ENCODE measurements at regions of chr9 and their contacts with region 1.

Region 1: GRCh38 chr9:129610473-129611301 is 10.2 kb downstream of the C9orf50 start:
- DNase-seq: peak; percentile 72 to 92 (median 80)
- H3K4me3 ChIP-seq: peak overlapping the region in 2 of 4 donors; percentile 67 to 90
- H3K27ac ChIP-seq: peak overlapping the region; percentile 48 to 92 (median 80)
- H3K4me1 ChIP-seq: peaks cover 14 to 35% of the 10 kb centered on the region in 2 donors
- H3K27me3 ChIP-seq: no peaks in the 10 kb centered on the region
- CTCF ChIP-seq: peak; percentile 57 to 100 (median 91)
- POLR2A ChIP-seq: peak in 1 of 2 donors; percentile 14

Region 2: DNA sequence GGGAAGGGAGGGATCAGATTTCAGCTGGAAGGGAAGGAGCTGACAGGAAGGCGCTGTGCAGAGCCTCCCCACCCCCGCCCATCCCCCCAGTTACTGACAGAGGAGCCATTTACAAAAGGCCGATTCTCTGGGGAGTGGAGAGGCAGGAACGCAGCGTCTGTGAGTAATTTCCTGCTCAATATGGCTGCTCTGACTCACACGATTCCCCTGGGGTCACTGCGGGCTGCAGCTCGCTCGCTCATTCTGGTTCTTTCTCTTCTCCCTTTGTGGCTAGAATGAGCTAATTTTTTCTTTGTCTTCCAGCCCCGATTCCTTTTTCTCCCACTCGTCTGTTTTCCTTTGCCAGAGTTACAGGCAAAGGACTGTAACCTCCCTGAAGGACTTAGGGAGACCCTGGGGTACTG is 470.7 kb before region 1 on chr9:
- intact Hi-C with region 1: loop called (anchors 5 kb)
- DNase-seq: peak; percentile 90 to 98 (median 97)
- H3K4me3 ChIP-seq: peak overlapping the region in 3 of 4 donors; percentile 26 to 50 (median 45)
- H3K27ac ChIP-seq: peak overlapping the region; percentile 98 to 100 (median 100)
- H3K4me1 ChIP-seq: peaks cover 57 to 78% of the 10 kb centered on the region in 2 donors
- H3K27me3 ChIP-seq: no peaks in the 10 kb centered on the region
- CTCF ChIP-seq: no peak
- POLR2A ChIP-seq: peak; percentile 20 to 83

Region 3: DNA sequence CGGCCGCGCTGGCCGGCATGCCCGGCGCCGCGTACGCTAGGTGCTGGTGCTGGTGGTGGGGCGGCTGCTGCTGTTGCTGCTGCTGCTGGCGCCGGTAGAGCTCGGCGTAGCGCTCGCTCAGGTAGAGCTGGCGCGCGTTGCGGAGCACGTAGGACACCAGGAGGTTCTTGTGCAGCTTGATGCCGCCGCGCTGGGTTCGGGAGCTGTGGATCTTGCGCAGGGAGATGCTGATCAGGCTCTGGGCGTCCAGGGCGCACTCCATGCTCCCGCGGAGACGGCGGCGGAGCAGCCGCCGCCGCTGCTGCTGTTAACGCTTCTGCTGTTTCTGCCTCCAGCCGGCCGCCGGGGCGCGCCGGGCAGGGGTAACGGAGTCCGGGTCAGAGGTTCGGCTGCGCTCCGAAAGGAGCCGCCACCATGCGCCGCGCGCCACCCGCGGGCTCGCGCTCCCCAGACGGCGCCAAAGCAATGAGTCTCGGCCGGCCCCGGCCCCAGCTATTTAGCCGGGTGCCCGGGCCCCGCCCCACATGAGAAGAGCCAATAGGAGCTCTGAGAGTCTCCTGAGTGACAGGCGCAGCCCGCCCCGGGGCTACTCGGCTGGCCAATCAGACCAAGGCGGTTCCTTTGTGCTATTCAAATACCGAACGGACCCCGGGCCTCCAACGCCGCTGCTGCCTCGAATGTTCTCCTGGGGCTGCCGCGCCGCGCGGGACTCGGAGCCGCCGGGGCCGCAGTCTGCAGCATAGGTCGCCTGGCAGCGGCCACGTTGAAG is 432.7 kb before region 1 on chr9 and contains the start of gene IER5L:
- intact Hi-C with region 1: loop called (anchors 2 kb)
- DNase-seq: peak; percentile 95 to 99 (median 97)
- H3K4me3 ChIP-seq: peak within 1 kb of the TSS; percentile 33 to 96 (median 82)
- H3K27ac ChIP-seq: peak within 1 kb of the TSS; percentile 93 to 99 (median 96)
- H3K4me1 ChIP-seq: peaks cover 11 to 32% of the 10 kb centered on the region in 2 donors
- H3K27me3 ChIP-seq: no peaks in the 10 kb centered on the region
- CTCF ChIP-seq: no peak
- POLR2A ChIP-seq: peak; percentile 96
- total RNA-seq, gene IER5L: 2.3 to 47.6 (median 17.5) TPM

Region 4: GRCh38 chr9:129282272-129283211 is 328.1 kb before region 1 on chr9:
- intact Hi-C with region 1: no loop called
- DNase-seq: peak in 4 of 7 donors; percentile 15 to 47 (median 18)
- H3K4me3 ChIP-seq: peak overlapping the region in 1 of 4 donors; percentile 51
- H3K27ac ChIP-seq: peak overlapping the region in 2 of 5 donors; percentile 36 to 59
- H3K4me1 ChIP-seq: no peaks in the 10 kb centered on the region
- H3K27me3 ChIP-seq: no peaks in the 10 kb centered on the region
- CTCF ChIP-seq: no peak
- POLR2A ChIP-seq: no peak

Region 5: GRCh38 chr9:129320575-129321263 is 290.0 kb before region 1 on chr9:
- intact Hi-C with region 1: loop called in 1 of 2 experiments (anchors 10 kb)
- DNase-seq: peak; percentile 58 to 90 (median 80)
- H3K4me3 ChIP-seq: peak overlapping the region in 2 of 4 donors; percentile 15 to 46
- H3K27ac ChIP-seq: peak overlapping the region in 4 of 5 donors; percentile 72 to 92 (median 82)
- H3K4me1 ChIP-seq: peaks cover 24 to 82% of the 10 kb centered on the region in 2 donors
- H3K27me3 ChIP-seq: no peaks in the 10 kb centered on the region
- CTCF ChIP-seq: peak in 5 of 6 experiments; percentile 26 to 36 (median 34)
- POLR2A ChIP-seq: peak; percentile 49 to 85

Region 6: GRCh38 chr9:129383561-129384416 is 226.9 kb before region 1 on chr9:
- intact Hi-C with region 1: loop called in 1 of 2 experiments (anchors 10 kb)
- DNase-seq: peak; percentile 81 to 92 (median 81)
- H3K4me3 ChIP-seq: peak overlapping the region in 2 of 4 donors; percentile 30 to 46
- H3K27ac ChIP-seq: peak overlapping the region; percentile 76 to 98 (median 88)
- H3K4me1 ChIP-seq: peaks cover 12 to 19% of the 10 kb centered on the region in 2 donors
- H3K27me3 ChIP-seq: no peaks in the 10 kb centered on the region
- CTCF ChIP-seq: peak in 2 of 6 experiments; percentile 17 to 21
- POLR2A ChIP-seq: peak in 1 of 2 donors; percentile 54

Region 7: DNA sequence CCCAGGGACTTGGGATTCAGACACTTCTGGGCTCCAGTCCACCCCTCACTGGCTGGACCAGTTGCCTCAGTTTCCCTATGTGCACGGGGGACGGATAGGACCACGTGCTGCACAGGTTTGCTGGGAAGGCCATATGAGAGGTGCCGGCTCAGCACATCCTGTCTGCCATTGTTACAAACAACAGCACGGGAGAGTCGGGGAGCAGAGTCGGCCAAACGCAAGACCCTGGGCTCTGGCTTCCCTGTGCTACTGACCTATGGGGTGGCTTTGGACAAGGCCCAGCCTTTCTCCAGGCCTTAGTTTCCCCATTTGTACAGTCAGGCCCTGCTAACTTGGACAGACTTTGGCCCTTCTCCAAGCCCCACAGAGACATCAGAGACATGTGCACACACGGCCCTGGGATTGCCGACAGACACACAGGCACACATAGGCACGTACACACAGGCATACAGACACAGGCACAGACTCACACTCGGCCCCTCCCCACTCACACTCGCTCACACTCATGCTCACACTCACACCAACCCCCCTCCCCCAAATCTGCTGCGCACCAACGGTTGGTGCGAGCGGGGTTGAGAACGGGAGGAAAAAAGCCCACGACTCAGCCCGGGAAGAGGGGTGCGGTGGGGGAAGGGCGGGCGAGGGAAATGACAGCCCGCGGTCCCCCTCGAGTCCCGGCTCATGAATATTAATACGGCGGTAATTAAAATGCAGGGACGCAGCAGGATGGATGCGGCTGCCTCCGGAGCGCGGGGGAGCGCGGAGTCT is 122.9 kb before region 1 on chr9:
- intact Hi-C with region 1: loop called in 1 of 2 experiments (anchors 5 kb)
- DNase-seq: peak in 6 of 7 donors; percentile 78 to 86 (median 82)
- H3K4me3 ChIP-seq: peak overlapping the region in 2 of 4 donors; percentile 11 to 65
- H3K27ac ChIP-seq: peak overlapping the region; percentile 98 to 100 (median 99)
- H3K4me1 ChIP-seq: peaks cover 80 to 85% of the 10 kb centered on the region in 2 donors
- H3K27me3 ChIP-seq: no peaks in the 10 kb centered on the region
- CTCF ChIP-seq: peak in 1 of 6 experiments; percentile 6
- POLR2A ChIP-seq: no peak

Region 8: DNA sequence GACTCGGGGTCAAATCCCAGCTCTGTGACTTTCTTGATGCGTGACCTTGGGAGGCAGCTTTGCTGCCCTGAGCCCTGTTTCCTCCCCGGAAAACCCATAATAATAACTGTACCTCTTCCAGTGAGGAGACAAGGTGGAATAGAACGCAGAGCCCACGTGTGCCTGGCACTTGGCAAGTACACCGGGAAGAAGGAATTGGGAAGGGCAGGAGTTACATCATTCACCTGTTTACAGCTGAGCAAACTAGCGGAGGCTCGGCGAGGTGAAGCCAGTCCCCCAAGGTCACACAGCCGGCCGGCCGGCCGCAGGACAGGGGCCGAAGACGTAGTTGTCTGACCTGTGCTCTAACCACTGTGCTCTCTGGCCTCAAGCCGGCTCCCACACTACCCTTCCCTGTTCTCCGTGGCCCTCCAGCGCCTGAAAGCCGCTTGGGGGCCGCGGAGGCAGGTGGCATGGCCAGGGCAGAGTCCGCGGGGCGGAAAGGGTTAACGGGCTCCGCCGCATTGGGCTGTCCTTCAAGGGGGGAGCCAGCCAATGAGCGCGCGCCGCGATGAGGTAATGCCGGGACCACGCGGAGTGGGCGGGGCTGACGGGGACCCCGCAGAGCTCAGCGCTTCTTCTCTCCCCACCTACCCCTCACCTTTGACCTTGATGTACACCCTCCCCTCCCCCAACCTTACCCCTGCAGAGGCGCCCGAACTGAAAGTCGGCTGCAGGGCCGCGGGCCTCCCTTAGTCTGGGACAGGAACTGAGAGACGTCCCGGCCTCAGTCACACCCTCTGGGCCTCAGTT is 115.0 kb before region 1 on chr9:
- intact Hi-C with region 1: loop called in 1 of 2 experiments (anchors 5 kb)
- DNase-seq: peak; percentile 95 to 98 (median 96)
- H3K4me3 ChIP-seq: peak overlapping the region in 2 of 4 donors; percentile 74 to 79
- H3K27ac ChIP-seq: peak overlapping the region; percentile 91 to 100 (median 95)
- H3K4me1 ChIP-seq: peaks cover 42 to 73% of the 10 kb centered on the region in 2 donors
- H3K27me3 ChIP-seq: no peaks in the 10 kb centered on the region
- CTCF ChIP-seq: peak in 1 of 6 experiments; percentile 14
- POLR2A ChIP-seq: peak in 1 of 2 donors; percentile 16

Measured in adrenal gland (tissue), 19 donors.